Naive thymus-derived CD4-positive, alpha-beta T cell (primary cell): ENCODE measurements at regions of chr3 and their contacts with region 1.

Region 1: DNA sequence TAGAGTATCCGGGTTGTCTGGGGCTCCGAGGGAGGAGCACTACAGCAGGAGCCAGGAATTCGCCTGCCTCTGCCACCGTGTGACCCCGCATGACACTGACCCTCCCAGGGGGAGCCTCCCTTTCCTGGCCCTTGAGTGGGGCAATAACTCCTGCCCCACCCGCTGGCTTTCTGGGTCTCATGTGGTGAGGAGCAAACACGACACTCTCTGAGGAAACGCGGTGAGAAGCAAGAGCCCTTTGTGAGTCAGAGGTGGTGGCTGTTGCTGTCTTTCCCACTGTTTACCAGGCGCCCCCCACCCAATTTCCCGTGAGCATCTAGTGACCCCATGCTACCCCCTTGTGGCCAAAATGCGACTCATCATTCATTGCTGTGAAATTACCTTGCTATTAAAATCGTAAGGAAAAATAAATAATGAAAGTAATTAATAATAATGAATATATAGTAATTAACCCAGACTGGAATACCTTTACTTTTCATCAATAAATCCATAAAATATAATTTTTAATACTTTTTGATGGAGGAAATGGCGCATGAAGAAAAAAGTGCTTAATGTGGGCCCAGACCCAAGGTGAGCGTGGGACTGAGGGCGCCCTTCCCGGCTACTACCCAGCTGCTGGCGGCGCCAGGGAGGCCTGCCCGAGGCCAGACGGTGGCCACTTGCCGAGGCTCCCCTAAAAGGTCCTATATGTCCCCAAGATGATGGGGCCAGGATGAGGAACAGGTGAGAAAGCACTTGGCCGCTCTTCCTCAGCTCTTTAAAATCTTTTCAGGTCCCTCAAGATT is 29.3 kb downstream of the CCNL1 start:
- DNase-seq: peak; percentile 43 to 86 (median 80)
- ATAC-seq: peak; percentile 78
- H3K4me3 ChIP-seq: peak overlapping the region; percentile 35
- H3K4me3 Mint-ChIP-seq: peak overlapping the region; percentile 61 to 84 (median 74)
- H3K27ac ChIP-seq: peak overlapping the region; percentile 80
- H3K27ac Mint-ChIP-seq: peak overlapping the region; percentile 93 to 99 (median 97)
- H3K4me1 ChIP-seq: peaks cover 44 to 69% of the 10 kb centered on the region in 2 donors
- H3K4me1 Mint-ChIP-seq: peaks cover 34 to 89% (median 60%) of the 10 kb centered on the region in 7 donors
- H3K27me3 ChIP-seq: no peaks in the 10 kb centered on the region
- H3K27me3 Mint-ChIP-seq: no peaks in the 10 kb centered on the region

Region 2: GRCh38 chr3:156151824-156152428 is 978.7 kb before region 1 on chr3:
- CTCF ChIA-PET with region 1: interaction called, 9 read pairs
- POLR2A ChIA-PET with region 1: interaction called, 3 read pairs
- intact Hi-C with region 1: loop called in 1 of 2 experiments (anchors 1 kb)
- DNase-seq: peak in 7 of 9 donors; percentile 18 to 40 (median 27)
- ATAC-seq: peak; percentile 58
- H3K4me3 ChIP-seq: no peak overlapping the region
- H3K4me3 Mint-ChIP-seq: no peak overlapping the region
- H3K27ac ChIP-seq: no peak overlapping the region
- H3K27ac Mint-ChIP-seq: no peak overlapping the region
- H3K4me1 ChIP-seq: no peaks in the 10 kb centered on the region
- H3K4me1 Mint-ChIP-seq: peaks cover 0 to 7% (median 0%) of the 10 kb centered on the region in 7 donors
- H3K27me3 ChIP-seq: no peaks in the 10 kb centered on the region
- H3K27me3 Mint-ChIP-seq: peaks cover 0 to 18% (median 0%) of the 10 kb centered on the region in 5 donors

Region 3: DNA sequence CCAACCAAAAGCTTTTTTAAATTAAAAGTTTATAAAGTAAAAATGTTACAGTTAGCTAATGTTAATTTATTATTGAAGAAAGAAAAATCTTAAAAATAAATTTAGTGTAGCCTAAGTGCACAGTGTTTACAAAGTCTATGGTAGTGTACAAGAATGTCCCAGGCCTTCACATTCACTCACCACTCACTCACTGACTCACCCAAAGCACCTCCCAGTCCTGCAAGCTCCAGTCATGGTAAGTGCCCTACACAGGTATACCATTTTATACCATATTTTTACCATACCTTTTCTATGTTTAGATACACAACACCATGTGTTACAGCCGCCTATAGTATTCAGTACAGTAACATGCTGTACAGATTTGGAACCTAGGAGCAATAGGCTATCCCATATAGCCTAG is 604.9 kb before region 1 on chr3:
- CTCF ChIA-PET with region 1: no interaction called
- POLR2A ChIA-PET with region 1: no interaction called
- intact Hi-C with region 1: loop called (anchors 1 to 2 kb)
- DNase-seq: no peak
- ATAC-seq: no peak
- H3K4me3 ChIP-seq: no peak overlapping the region
- H3K4me3 Mint-ChIP-seq: peak overlapping the region in 1 of 10 donors; percentile 20
- H3K27ac ChIP-seq: no peak overlapping the region
- H3K27ac Mint-ChIP-seq: peak overlapping the region in 1 of 9 donors; percentile 52
- H3K4me1 ChIP-seq: peaks cover 6 to 10% of the 10 kb centered on the region in 2 donors
- H3K4me1 Mint-ChIP-seq: peaks cover 5 to 24% (median 13%) of the 10 kb centered on the region in 7 donors
- H3K27me3 ChIP-seq: no peaks in the 10 kb centered on the region
- H3K27me3 Mint-ChIP-seq: peaks cover 10 to 54% (median 19%) of the 10 kb centered on the region in 5 donors

Region 4: DNA sequence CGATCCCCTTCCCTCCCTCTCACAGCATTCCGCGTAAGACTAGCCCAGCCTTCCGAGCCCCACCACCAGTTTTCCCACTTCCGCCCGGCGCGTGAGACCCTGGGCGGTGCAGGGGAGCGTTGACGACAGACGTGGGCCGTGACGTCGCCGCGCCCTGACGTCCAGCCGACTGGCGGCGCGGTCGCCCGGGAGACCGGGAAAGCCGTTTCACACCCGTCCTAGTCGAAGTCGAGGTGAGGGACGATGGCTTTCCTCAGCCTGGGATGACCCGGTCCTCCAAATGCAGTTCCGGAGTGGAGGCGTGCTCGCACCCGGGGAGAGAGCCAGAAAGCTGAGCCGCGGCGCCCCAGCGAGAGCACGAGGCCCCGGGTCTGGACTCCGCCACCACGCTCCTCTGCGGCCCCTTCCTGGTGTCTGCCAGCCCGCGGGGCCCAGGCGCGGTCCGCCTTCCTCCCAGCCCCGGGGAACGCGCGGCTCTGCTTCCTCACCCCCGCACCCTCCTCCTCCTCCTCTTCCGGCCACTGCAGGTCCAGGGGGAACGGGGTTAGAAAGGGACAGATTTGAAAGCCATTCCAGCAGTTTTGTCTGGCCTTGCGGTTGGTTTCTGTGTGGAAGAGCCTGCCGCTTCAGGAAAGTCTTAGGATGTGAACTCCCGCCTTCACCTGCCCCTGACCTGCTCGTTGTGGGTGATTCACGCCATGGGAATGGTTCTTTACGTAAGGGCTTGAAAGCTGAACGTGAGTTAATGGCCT is 304.3 kb before region 1 on chr3 and contains the start of gene LEKR1:
- CTCF ChIA-PET with region 1: no interaction called
- POLR2A ChIA-PET with region 1: no interaction called
- intact Hi-C with region 1: loop called in 1 of 2 experiments (anchors 1 kb)
- DNase-seq: peak; percentile 38 to 73 (median 59)
- ATAC-seq: peak; percentile 84
- H3K4me3 ChIP-seq: peak within 1 kb of the TSS; percentile 73
- H3K4me3 Mint-ChIP-seq: peak within 1 kb of the TSS; percentile 85 to 98 (median 96)
- H3K27ac ChIP-seq: peak within 1 kb of the TSS; percentile 80
- H3K27ac Mint-ChIP-seq: peak within 1 kb of the TSS; percentile 91 to 99 (median 97)
- H3K4me1 ChIP-seq: no peaks in the 10 kb centered on the region
- H3K4me1 Mint-ChIP-seq: peaks cover 7 to 43% (median 19%) of the 10 kb centered on the region in 7 donors
- H3K27me3 ChIP-seq: no peaks in the 10 kb centered on the region
- H3K27me3 Mint-ChIP-seq: peaks cover 0 to 6% (median 0%) of the 10 kb centered on the region in 5 donors
- total RNA-seq, gene LEKR1: 0.31 to 5.1 (median 1.2) TPM

Region 5: DNA sequence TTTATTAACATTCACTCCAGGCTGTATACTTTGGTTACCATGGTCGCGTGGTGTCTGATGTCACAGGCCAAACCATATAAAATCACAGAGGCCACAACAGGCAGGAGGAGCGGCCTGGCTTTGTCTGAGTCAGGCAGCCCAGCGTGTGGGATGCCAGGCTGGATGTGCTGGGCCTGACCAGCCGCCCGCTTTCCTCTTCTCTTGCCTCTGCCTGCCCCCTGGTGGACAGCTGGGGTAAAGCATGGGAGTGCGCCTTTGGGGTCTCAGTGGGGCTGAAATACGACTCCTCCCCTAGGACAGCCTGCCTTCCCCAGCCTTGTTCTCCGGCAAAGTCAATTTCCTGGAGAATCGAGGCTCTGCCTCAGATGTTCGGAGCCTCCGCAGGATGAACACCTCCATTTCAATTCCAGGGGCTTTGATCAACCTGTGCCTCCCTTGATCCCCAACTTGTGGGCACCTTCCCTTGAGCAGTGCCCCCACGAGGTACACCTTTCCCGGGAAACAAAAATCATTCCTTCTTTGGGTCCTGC is 48.9 kb before region 1 on chr3:
- CTCF ChIA-PET with region 1: interaction called, 6 read pairs
- POLR2A ChIA-PET with region 1: interaction called, 19 read pairs
- intact Hi-C with region 1: loop called in 1 of 2 experiments (anchors 1 kb)
- DNase-seq: peak; percentile 60 to 86 (median 70)
- ATAC-seq: peak; percentile 96
- H3K4me3 ChIP-seq: no peak overlapping the region
- H3K4me3 Mint-ChIP-seq: no peak overlapping the region
- H3K27ac ChIP-seq: no peak overlapping the region
- H3K27ac Mint-ChIP-seq: peak overlapping the region in 8 of 9 donors; percentile 9 to 79 (median 56)
- H3K4me1 ChIP-seq: peaks cover 0 to 12% of the 10 kb centered on the region in 2 donors
- H3K4me1 Mint-ChIP-seq: peaks cover 0 to 54% (median 6%) of the 10 kb centered on the region in 7 donors
- H3K27me3 ChIP-seq: no peaks in the 10 kb centered on the region
- H3K27me3 Mint-ChIP-seq: no peaks in the 10 kb centered on the region

Region 6: DNA sequence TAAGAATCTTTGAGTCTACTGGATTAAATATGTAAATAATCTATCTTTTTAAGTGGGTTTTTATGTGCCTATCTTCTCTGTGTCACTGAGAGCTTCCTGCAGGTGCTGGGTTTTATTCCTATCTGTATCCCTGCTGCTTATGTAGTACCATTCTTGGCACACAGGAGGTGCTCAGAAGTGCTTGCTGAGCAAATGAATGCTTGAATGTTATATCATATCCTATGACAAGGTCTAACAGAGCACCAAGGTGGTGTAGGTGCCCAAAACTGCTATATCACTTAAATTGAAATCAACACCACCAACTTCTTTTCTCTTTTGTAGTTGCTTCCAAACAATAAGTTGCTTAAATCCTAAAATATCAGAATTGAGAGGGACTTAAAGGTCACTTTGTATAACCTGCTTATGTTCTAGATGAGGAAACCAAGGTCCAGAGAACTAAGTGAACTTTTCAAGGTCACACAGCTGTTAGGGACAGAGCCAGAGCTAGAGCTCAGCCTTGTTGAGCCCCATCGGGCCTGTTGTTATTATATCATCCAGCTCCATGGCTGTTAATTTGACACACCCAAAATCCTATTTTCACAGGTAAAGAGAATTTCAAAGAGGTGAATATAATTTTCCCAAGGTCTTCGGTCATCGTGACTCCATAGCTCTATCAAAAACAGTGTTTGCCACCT is 16.7 kb before region 1 on chr3:
- CTCF ChIA-PET with region 1: interaction called, 4 read pairs
- POLR2A ChIA-PET with region 1: interaction called, 13 read pairs
- intact Hi-C with region 1: loop called (anchors 1 kb)
- DNase-seq: peak in 3 of 9 donors; percentile 19 to 27 (median 26)
- ATAC-seq: peak; percentile 66
- H3K4me3 ChIP-seq: no peak overlapping the region
- H3K4me3 Mint-ChIP-seq: no peak overlapping the region
- H3K27ac ChIP-seq: no peak overlapping the region
- H3K27ac Mint-ChIP-seq: peak overlapping the region in 1 of 9 donors; percentile 26
- H3K4me1 ChIP-seq: no peaks in the 10 kb centered on the region
- H3K4me1 Mint-ChIP-seq: peaks cover 0 to 17% (median 0%) of the 10 kb centered on the region in 7 donors
- H3K27me3 ChIP-seq: no peaks in the 10 kb centered on the region
- H3K27me3 Mint-ChIP-seq: no peaks in the 10 kb centered on the region

Region 7: GRCh38 chr3:157360044-157360443 is 229.4 kb after region 1 on chr3:
- CTCF ChIA-PET with region 1: no interaction called
- POLR2A ChIA-PET with region 1: no interaction called
- intact Hi-C with region 1: no loop called
- DNase-seq: no peak
- ATAC-seq: no peak
- H3K4me3 ChIP-seq: no peak overlapping the region
- H3K4me3 Mint-ChIP-seq: no peak overlapping the region
- H3K27ac ChIP-seq: no peak overlapping the region
- H3K27ac Mint-ChIP-seq: no peak overlapping the region
- H3K4me1 ChIP-seq: no peaks in the 10 kb centered on the region
- H3K4me1 Mint-ChIP-seq: no peaks in the 10 kb centered on the region
- H3K27me3 ChIP-seq: no peaks in the 10 kb centered on the region
- H3K27me3 Mint-ChIP-seq: peaks cover 0 to 5% (median 3%) of the 10 kb centered on the region in 5 donors